Mammary epithelial cell (primary cell): ENCODE measurements at regions of chr16 and their contacts with region 1.

Region 1: GRCh38 chr16:53435066-53435688 is 906 bp downstream of the RBL2 start:
- DNase-seq: peak; percentile 83
- H3K4me3 ChIP-seq: peak overlapping the region; percentile 70 to 97 (median 95)
- H3K27ac ChIP-seq: peak overlapping the region; percentile 81
- H3K4me1 ChIP-seq: peaks cover 15% of the 10 kb centered on the region
- H3K27me3 ChIP-seq: no peaks in the 10 kb centered on the region
- CTCF ChIP-seq: no peak

Region 2: DNA sequence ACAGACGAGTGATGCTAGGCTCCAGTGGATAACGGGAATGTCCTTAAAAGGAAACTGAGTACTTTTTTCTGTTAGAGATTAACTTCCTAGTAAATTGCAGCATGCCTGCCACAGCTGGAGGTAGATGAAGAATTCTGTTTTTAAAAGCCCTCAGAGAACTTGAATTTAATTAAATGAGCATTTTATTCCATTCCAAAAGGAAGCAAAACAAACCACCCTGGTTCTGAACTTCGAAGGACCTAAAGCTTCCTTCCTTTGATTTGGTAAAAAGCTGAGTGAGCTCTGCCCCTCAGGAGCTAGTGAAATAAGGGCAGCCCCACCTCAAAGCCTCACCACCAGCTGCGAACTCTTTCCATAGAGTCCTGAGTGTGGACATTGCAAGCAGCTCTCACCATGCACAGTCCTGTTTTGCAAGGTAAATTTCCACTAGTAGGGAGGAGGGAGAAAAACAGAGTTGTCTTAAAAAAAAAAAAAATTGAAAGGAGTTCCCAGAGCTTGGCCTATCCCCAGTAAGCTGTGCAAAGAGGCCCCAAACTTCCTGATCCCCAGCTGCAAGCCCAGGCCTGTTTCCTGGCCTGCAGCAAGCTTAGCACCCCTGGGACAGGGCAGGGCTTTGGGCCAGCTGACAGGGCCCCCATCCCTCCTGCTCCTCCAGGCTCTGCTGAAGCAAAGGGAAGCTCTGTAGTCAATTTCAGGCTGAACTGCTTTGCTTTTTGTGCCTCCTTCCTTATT is 393.7 kb before region 1 on chr16:
- CTCF ChIA-PET with region 1: no interaction called
- dilution Hi-C with region 1: no loop called
- in situ Hi-C with region 1: no loop called
- intact Hi-C with region 1: loop called (anchors 10 kb)
- DNase-seq: peak; percentile 90
- H3K4me3 ChIP-seq: peak overlapping the region; percentile 7 to 35 (median 26)
- H3K27ac ChIP-seq: peak overlapping the region; percentile 50
- H3K4me1 ChIP-seq: peaks cover 45% of the 10 kb centered on the region
- H3K27me3 ChIP-seq: no peaks in the 10 kb centered on the region
- CTCF ChIP-seq: no peak

Region 3: GRCh38 chr16:53356478-53357200 is 78.5 kb before region 1 on chr16:
- CTCF ChIA-PET with region 1: no interaction called
- dilution Hi-C with region 1: loop called (anchors 5 kb)
- in situ Hi-C with region 1: no loop called
- intact Hi-C with region 1: no loop called
- DNase-seq: no peak
- H3K4me3 ChIP-seq: no peak overlapping the region
- H3K27ac ChIP-seq: no peak overlapping the region
- H3K4me1 ChIP-seq: no peaks in the 10 kb centered on the region
- H3K27me3 ChIP-seq: no peaks in the 10 kb centered on the region
- CTCF ChIP-seq: no peak

Region 4: DNA sequence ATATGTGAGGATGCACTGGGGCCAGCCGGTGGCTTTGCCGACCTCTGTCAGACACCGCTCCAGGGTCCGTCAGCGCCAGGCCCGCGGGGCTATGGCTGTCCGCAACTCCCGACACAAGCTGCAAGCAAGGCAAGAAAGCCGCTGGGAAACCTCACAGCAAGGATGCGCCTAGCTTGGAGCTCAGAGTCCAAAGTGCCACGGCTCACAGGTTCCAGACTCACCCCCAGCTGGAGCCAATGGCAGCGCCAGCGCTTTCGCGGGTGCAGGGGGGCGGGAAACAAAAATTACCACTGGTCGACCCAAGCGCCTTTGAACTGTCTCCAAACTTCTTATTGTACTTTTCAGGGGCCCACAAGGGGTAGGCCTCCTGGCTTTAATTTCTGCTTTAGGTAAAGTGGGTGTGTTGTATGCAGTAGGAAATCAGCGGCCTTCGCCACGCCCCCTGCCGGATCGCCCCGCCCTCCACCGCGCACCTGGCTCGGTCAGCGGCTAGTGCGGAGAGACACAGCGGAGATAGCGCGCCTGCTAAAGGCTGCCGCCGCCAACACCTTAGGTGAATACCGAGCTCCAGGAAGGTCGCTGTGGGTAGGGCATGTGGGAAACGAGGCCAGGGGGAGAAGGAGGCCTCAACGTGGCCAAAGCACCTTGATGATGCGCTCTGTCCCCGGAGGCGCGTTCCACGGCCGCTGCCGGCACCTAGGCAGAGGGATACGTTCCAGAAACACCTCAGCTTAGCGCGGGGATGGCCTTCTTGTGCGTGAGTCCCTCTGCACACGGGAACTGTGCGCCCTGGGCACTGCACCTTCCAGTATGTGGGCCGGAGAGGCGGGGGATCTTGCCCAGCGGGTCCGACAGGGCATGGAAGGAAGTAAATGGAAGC is 61.9 kb before region 1 on chr16:
- CTCF ChIA-PET with region 1: no interaction called
- dilution Hi-C with region 1: no loop called
- in situ Hi-C with region 1: no loop called
- intact Hi-C with region 1: loop called (anchors 2 kb)
- DNase-seq: peak; percentile 74
- H3K4me3 ChIP-seq: peak overlapping the region; percentile 50 to 65 (median 65)
- H3K27ac ChIP-seq: no peak overlapping the region
- H3K4me1 ChIP-seq: peaks cover 12% of the 10 kb centered on the region
- H3K27me3 ChIP-seq: peaks cover 7% of the 10 kb centered on the region
- CTCF ChIP-seq: no peak

Region 5: DNA sequence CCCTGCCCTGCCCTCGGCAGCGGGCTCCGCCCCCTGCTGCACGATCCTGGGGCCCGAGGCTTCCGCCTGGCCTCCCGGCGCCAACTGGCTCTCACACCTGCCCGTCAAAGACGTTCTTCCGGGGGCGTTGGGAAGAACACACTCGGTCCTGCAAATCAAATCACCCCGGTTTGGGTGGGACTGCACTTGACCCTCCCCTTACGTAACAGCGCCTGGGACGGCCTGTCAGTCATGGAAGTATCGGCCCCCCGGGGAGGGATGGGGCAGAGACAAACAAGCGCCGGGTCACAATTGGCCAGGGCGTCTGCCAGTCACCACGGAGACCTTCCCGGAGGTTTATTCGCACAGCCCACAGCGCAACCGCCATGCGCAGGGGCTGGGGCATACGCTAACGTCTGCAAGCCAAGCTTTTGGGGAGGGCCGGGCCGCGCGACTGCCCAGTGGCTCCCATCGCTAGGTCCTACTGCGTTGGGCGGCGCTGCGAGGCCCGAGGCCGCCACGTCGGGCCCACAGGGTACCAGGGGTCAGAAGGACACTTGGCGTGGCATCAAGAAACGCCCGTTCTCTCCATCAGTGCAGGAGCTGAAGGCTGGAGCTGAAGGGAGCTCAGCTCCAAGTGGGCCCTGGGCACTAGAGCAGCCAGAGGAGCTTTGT is 68.2 kb after region 1 on chr16:
- CTCF ChIA-PET with region 1: no interaction called
- dilution Hi-C with region 1: no loop called
- in situ Hi-C with region 1: no loop called
- intact Hi-C with region 1: loop called (anchors 2 kb)
- DNase-seq: peak; percentile 100
- H3K4me3 ChIP-seq: peak overlapping the region; percentile 74 to 90 (median 79)
- H3K27ac ChIP-seq: peak overlapping the region; percentile 42
- H3K4me1 ChIP-seq: peaks cover 24% of the 10 kb centered on the region
- H3K27me3 ChIP-seq: no peaks in the 10 kb centered on the region
- CTCF ChIP-seq: no peak

Region 6: GRCh38 chr16:53509906-53510703 is 74.9 kb after region 1 on chr16:
- CTCF ChIA-PET with region 1: no interaction called
- dilution Hi-C with region 1: no loop called
- in situ Hi-C with region 1: no loop called
- intact Hi-C with region 1: loop called (anchors 2 kb)
- DNase-seq: peak; percentile 39
- H3K4me3 ChIP-seq: no peak overlapping the region
- H3K27ac ChIP-seq: no peak overlapping the region
- H3K4me1 ChIP-seq: no peaks in the 10 kb centered on the region
- H3K27me3 ChIP-seq: no peaks in the 10 kb centered on the region
- CTCF ChIP-seq: peak; percentile 93 to 97

Region 7: GRCh38 chr16:53611179-53611696 is 176.1 kb after region 1 on chr16:
- CTCF ChIA-PET with region 1: no interaction called
- dilution Hi-C with region 1: no loop called
- in situ Hi-C with region 1: no loop called
- intact Hi-C with region 1: no loop called
- DNase-seq: no peak
- H3K4me3 ChIP-seq: no peak overlapping the region
- H3K27ac ChIP-seq: no peak overlapping the region
- H3K4me1 ChIP-seq: no peaks in the 10 kb centered on the region
- H3K27me3 ChIP-seq: no peaks in the 10 kb centered on the region
- CTCF ChIP-seq: no peak